ENCODE measurements at regions of chr18 and their contacts with region 1.

Region 1: DNA sequence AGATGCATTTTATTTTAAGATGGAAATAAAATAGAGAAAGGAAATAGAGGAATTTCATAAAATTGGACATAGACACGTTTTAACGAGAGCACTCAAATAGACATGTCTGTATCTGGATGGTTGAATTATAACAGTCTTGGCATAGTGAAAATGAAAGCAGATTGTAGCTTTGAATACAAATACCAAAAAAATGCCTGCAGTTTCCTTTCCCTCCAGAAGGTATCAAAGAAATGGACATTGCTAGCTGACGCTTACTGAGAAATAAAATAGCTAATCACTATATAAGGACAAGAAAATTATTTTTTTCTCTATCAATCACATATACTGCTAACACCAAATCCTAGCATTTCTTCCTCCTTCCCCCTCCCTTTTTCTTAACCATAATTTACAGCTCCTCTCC is 11.4 kb upstream of the MAPRE2 start:
- DNase-seq: no peak
- H3K4me3 Mint-ChIP-seq: peak overlapping the region; percentile 70
- H3K27ac Mint-ChIP-seq: peak overlapping the region; percentile 92
- H3K4me1 Mint-ChIP-seq: peaks cover 61% of the 10 kb centered on the region
- H3K27me3 Mint-ChIP-seq: no peaks in the 10 kb centered on the region

Region 2: DNA sequence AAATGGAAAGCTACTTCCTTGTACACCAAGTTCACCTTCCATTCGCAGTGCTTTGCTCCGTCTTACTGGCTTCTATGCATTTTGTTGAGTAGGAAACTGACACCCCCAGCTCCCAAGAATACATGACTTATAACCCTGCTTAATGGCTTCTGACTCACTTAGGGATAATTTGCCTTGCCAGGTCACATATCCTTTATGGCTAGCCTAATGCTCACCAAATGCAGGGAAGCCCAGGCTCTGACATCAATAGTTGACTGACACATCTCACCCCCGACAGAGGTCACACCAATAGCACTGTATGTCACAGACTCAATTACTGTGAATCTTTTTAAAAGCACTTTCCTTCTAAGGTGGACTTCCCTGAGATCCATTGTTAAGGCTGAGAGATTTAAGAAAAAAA is 172.4 kb before region 1 on chr18:
- CTCF ChIA-PET with region 1: no interaction called
- intact Hi-C with region 1: loop called (anchors 1 kb)
- DNase-seq: no peak
- H3K4me3 Mint-ChIP-seq: no peak overlapping the region
- H3K27ac Mint-ChIP-seq: no peak overlapping the region
- H3K4me1 Mint-ChIP-seq: peaks cover 32% of the 10 kb centered on the region
- H3K27me3 Mint-ChIP-seq: peaks cover 11% of the 10 kb centered on the region

Region 3: DNA sequence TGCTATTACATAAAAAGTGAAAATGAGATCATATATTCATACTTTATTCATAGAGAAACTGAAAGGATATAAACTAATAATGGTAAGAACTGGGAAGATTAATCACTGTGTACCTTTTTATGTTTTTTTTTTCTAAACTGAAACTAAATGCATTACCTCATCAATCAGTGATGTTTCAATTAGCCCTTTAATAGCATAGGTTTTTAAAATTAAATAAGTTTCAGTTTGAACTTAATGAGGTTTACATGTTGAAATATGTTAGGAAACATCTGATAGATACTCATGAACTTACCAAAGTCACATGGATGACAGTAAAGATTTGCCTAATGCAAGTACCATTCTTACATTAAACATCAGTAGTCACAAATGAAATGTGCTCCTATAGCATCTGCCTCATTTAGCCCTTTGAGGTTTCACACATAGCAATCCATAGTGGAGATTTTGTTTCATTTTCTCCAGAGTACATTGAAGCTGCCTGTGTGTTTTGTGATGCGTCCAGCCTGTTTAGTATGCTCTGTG is 20.3 kb after region 1 on chr18:
- CTCF ChIA-PET with region 1: interaction called, 13 read pairs
- intact Hi-C with region 1: loop called (anchors 1 kb)
- DNase-seq: no peak
- H3K4me3 Mint-ChIP-seq: peak overlapping the region; percentile 62
- H3K27ac Mint-ChIP-seq: peak overlapping the region; percentile 81
- H3K4me1 Mint-ChIP-seq: peaks cover 79% of the 10 kb centered on the region
- H3K27me3 Mint-ChIP-seq: no peaks in the 10 kb centered on the region

Region 4: DNA sequence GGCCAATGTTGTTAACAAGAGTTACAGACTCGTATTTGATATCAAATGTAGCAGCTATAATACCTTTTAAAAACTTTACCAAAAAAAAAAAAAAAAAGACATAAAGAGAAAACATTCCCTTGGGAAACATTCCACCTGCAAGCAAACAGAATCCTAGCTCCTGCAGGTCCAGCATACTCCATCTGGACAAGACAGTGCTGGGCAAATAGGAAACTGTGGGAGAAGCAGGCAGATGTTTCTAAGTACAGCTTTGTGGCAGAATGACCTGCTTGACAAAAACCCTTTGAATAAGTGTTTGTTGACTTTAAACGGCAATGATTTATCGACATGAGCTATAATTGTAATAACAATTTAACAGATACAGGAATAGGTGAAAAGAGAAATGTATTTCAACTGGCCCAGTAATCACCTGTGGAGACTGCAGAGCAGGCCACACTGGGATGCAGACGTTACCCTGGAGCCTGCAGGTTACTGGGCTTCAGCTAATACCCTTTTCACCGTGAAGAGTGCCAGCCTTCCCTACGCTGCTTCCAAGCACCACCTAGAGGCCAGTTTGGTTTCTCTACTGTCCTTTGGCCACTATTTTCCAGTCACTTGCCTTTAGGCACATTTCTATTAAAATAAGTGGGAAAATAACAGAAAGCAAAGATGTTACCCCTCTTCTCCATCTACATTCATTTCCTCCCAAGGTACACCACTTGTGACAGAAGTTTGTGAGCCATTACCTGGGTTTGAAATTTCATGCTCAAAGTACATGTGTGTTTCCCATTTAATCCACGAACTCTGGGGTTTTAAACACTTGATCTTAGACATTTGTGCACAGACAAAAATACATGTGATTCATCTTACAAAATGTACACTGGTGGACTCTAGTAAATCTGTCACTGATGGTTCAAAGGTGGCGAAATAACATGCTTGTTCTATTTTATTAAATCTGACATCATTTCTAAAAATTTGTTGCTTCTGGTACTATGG is 114.1 kb after region 1 on chr18:
- CTCF ChIA-PET with region 1: interaction called, 36 read pairs
- intact Hi-C with region 1: loop called (anchors 1 kb)
- DNase-seq: peak; percentile 62
- H3K4me3 Mint-ChIP-seq: no peak overlapping the region
- H3K27ac Mint-ChIP-seq: peak overlapping the region; percentile 53
- H3K4me1 Mint-ChIP-seq: peaks cover 2% of the 10 kb centered on the region
- H3K27me3 Mint-ChIP-seq: no peaks in the 10 kb centered on the region

Region 5: DNA sequence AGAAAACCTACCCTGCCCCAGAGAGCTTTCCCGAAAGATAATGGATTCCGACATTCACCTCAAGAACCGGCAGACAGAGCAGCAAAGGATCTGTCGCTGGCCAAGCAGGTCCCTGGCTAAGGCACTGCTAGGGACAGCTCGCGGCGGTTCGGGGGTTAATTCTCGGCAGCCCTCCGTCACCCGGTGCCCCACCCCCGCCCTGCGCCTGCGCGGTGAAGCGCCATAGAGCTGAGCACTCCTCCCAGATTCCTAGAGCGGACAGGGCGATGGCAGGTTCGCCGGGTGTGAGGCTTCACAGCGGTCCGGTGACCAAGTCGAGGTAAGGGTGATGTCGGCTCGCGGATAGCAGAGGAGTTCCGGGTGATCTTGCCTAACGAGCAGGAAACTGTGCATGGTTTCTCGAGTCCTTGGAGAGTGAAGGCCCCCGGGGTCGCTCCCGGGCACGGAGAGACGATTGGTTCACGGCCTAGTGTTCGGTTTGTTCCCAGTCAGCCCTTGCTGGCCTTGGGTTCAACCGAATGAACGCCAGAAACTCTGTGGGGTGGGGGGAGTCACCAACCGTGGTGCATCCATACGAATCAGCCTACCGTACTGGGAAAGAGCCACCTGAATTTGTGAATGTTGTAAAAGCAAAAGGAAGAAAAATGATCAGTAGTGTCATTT is 260.4 kb after region 1 on chr18 and contains the start of gene ZSCAN30:
- CTCF ChIA-PET with region 1: no interaction called
- intact Hi-C with region 1: loop called (anchors 2 kb)
- DNase-seq: peak; percentile 96
- H3K4me3 Mint-ChIP-seq: peak within 1 kb of the TSS; percentile 96
- H3K27ac Mint-ChIP-seq: peak within 1 kb of the TSS; percentile 97
- H3K4me1 Mint-ChIP-seq: peaks cover 48% of the 10 kb centered on the region
- H3K27me3 Mint-ChIP-seq: peaks cover 2% of the 10 kb centered on the region
- total RNA-seq, gene ZSCAN30: 12.0 to 14.3 TPM

Region 6: GRCh38 chr18:35376742-35377695 is 347.2 kb after region 1 on chr18 and contains the start of gene ZNF396:
- CTCF ChIA-PET with region 1: no interaction called
- intact Hi-C with region 1: loop called (anchors 5 kb)
- DNase-seq: peak; percentile 83
- H3K4me3 Mint-ChIP-seq: peak within 1 kb of the TSS; percentile 79
- H3K27ac Mint-ChIP-seq: peak within 1 kb of the TSS; percentile 13
- H3K4me1 Mint-ChIP-seq: peaks cover 6% of the 10 kb centered on the region
- H3K27me3 Mint-ChIP-seq: no peaks in the 10 kb centered on the region
- total RNA-seq, gene ZNF396: 0.74 to 0.77 TPM

Region 7: DNA sequence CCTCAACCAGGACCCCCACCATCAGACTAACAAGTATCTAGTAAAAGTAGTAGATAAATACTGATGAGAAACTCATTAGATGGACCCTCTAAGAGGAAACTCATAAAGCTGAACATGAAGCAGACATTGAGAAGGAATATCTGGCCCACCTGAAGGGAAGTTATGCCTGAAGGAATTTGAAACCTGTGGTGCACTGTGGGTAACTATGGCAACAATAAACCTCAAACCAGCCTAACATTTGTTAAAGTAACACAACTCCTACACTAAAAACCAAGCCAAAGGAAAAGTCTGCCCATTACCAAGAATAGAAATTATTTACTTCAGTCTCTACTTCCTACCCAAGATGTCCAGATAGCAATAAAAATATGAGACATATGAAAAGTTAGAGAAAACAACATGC is 1842.6 kb after region 1 on chr18:
- CTCF ChIA-PET with region 1: no interaction called
- intact Hi-C with region 1: no loop called
- DNase-seq: no peak
- H3K4me3 Mint-ChIP-seq: no peak overlapping the region
- H3K27ac Mint-ChIP-seq: no peak overlapping the region
- H3K4me1 Mint-ChIP-seq: no peaks in the 10 kb centered on the region
- H3K27me3 Mint-ChIP-seq: no peaks in the 10 kb centered on the region

Measured in activated naive CD4-positive, alpha-beta T cell treated with anti-CD3 and anti-CD28 coated beads for 36 hours (primary cell).